PC-3 (cell line): ENCODE measurements at regions of chr7 and their contacts with region 1.

Region 1: DNA sequence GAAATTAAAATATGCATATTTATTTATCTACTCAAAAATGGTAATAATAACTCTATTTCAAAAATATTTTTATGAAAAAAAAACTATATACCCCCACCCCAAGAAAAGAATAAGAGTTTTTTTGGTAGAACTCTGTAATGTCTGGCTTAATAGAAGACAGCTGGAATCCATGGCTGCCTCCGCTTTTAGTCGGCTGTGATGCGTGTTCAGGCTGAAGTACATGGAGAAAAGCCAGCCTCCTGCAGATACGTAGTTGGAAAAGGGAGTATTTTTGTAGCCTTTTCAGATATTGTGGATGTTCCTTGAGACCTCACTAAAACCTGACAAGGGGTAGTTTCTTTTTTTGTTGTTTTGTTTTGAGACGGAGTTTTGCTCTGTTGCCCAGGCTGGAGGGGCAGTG is 10.0 kb downstream of the FOXK1 start:
- DNase-seq: no peak
- ATAC-seq: no peak
- H3K4me3 ChIP-seq: no peak overlapping the region
- H3K27ac ChIP-seq: no peak overlapping the region
- H3K4me1 ChIP-seq: no peaks in the 10 kb centered on the region
- H3K27me3 ChIP-seq: no peaks in the 10 kb centered on the region
- CTCF ChIP-seq: no peak

Region 2: DNA sequence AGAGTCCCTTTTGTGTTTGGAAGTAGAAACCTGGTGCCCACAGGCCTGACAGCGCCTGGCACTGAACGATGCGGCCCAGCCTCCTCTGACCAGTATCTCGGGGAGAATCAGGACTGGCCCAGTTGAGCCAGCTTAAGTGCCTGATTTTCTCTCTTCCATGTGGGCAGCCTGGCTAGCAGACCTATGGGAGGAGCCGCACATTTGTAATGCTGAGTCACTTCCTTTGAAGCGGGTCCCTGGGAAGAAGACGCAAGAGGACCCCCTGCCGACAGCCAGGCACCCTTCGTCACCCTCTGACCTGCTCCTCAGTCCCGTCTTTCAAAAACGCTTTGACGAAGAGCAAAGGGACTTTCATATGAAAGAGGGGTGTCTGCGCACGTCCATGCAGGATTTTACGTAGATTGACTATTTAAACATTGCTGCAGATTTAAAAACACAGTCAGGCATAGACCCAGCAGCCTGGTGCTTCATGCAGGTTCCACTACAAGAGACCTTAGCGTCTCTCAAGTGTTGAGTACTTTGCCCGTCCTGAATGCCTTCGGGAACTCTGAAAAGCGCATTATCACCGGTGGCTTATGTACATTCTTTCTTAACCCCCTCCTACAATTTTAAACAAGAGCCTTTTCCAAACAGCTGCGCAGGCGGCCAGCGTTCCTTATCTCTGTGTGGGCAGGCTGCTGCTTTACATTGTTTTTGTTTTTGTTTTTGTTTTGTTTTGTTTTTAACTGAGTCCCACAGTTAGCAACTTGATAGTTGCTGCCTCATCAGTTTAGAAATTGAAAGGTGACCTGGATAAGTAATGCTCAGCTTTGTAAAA is 46.9 kb after region 1 on chr7:
- CTCF ChIA-PET with region 1: no interaction called
- POLR2A ChIA-PET with region 1: interaction called, 35 read pairs
- intact Hi-C with region 1: no loop called
- DNase-seq: no peak
- ATAC-seq: peak; percentile 26; the same call in 1 of the 2 replicates
- H3K4me3 ChIP-seq: no peak overlapping the region
- H3K27ac ChIP-seq: no peak overlapping the region
- H3K4me1 ChIP-seq: peaks cover 11% of the 10 kb centered on the region
- H3K27me3 ChIP-seq: no peaks in the 10 kb centered on the region
- CTCF ChIP-seq: no peak